ENCODE measurements at regions of chr6 and their contacts with region 1.

Region 1: GRCh38 chr6:53300656-53301551 is 47.8 kb downstream of the ELOVL5 start:
- DNase-seq: peak; percentile 40 to 70 (median 52)
- H3K4me3 ChIP-seq: peak overlapping the region in 1 of 2 donors; percentile 28
- H3K4me3 Mint-ChIP-seq: peak overlapping the region; percentile 57 to 85 (median 73)
- H3K27ac ChIP-seq: peak overlapping the region; percentile 47
- H3K27ac Mint-ChIP-seq: peak overlapping the region; percentile 81 to 97 (median 95)
- H3K4me1 ChIP-seq: peaks cover 81% of the 10 kb centered on the region
- H3K4me1 Mint-ChIP-seq: peaks cover 67 to 87% (median 79%) of the 10 kb centered on the region in 4 donors
- H3K27me3 ChIP-seq: no peaks in the 10 kb centered on the region
- H3K27me3 Mint-ChIP-seq: no peaks in the 10 kb centered on the region

Region 2: GRCh38 chr6:53151676-53152075 is 149.2 kb before region 1 on chr6:
- CTCF ChIA-PET with region 1: no interaction called
- POLR2A ChIA-PET with region 1: no interaction called
- intact Hi-C with region 1: no loop called
- DNase-seq: no peak
- H3K4me3 ChIP-seq: no peak overlapping the region
- H3K4me3 Mint-ChIP-seq: no peak overlapping the region
- H3K27ac ChIP-seq: no peak overlapping the region
- H3K27ac Mint-ChIP-seq: no peak overlapping the region
- H3K4me1 ChIP-seq: no peaks in the 10 kb centered on the region
- H3K4me1 Mint-ChIP-seq: no peaks in the 10 kb centered on the region
- H3K27me3 ChIP-seq: no peaks in the 10 kb centered on the region
- H3K27me3 Mint-ChIP-seq: peaks cover 2 to 20% of the 10 kb centered on the region in 2 donors

Region 3: DNA sequence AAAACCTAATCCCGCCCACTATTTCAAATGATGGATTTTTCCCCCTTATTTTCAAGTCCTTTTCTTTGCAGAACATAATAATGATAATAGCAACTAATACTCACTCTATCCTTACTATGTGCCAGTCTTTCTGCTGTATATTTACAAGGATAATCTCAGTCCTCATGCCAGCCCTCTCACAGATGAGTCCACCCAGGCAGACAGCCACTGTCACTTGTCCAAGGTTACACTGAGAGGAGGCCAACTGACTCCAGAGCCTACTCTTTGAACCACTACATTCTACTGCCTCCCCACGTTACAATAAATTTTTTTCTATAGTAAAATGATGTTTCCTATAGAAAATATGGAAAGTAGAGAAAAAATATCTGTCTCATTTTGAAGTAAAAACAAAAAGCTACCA is 17.0 kb after region 1 on chr6:
- CTCF ChIA-PET with region 1: interaction called, 10 read pairs
- POLR2A ChIA-PET with region 1: interaction called, 7 read pairs
- intact Hi-C with region 1: loop called (anchors 2 kb)
- DNase-seq: no peak
- H3K4me3 ChIP-seq: no peak overlapping the region
- H3K4me3 Mint-ChIP-seq: no peak overlapping the region
- H3K27ac ChIP-seq: no peak overlapping the region
- H3K27ac Mint-ChIP-seq: peak overlapping the region in 4 of 7 donors; percentile 20 to 69 (median 46)
- H3K4me1 ChIP-seq: peaks cover 76% of the 10 kb centered on the region
- H3K4me1 Mint-ChIP-seq: peaks cover 59 to 87% (median 73%) of the 10 kb centered on the region in 4 donors
- H3K27me3 ChIP-seq: no peaks in the 10 kb centered on the region
- H3K27me3 Mint-ChIP-seq: no peaks in the 10 kb centered on the region

Region 4: GRCh38 chr6:53326372-53327016 is 25.6 kb after region 1 on chr6:
- CTCF ChIA-PET with region 1: interaction called, 3 read pairs
- POLR2A ChIA-PET with region 1: interaction called, 12 read pairs
- intact Hi-C with region 1: no loop called
- DNase-seq: no peak
- H3K4me3 ChIP-seq: no peak overlapping the region
- H3K4me3 Mint-ChIP-seq: peak overlapping the region in 3 of 8 donors; percentile 23 to 52 (median 40)
- H3K27ac ChIP-seq: no peak overlapping the region
- H3K27ac Mint-ChIP-seq: peak overlapping the region; percentile 37 to 85 (median 75)
- H3K4me1 ChIP-seq: peaks cover 86% of the 10 kb centered on the region
- H3K4me1 Mint-ChIP-seq: peaks cover 63 to 83% (median 72%) of the 10 kb centered on the region in 4 donors
- H3K27me3 ChIP-seq: no peaks in the 10 kb centered on the region
- H3K27me3 Mint-ChIP-seq: no peaks in the 10 kb centered on the region

Region 5: GRCh38 chr6:53335208-53335994 is 34.5 kb after region 1 on chr6:
- CTCF ChIA-PET with region 1: interaction called, 6 read pairs
- POLR2A ChIA-PET with region 1: interaction called, 47 read pairs
- intact Hi-C with region 1: loop called (anchors 2 kb)
- DNase-seq: peak; percentile 80 to 92 (median 86)
- H3K4me3 ChIP-seq: peak overlapping the region; percentile 32 to 66
- H3K4me3 Mint-ChIP-seq: peak overlapping the region; percentile 85 to 96 (median 91)
- H3K27ac ChIP-seq: peak overlapping the region; percentile 88
- H3K27ac Mint-ChIP-seq: peak overlapping the region; percentile 95 to 100 (median 99)
- H3K4me1 ChIP-seq: peaks cover 96% of the 10 kb centered on the region
- H3K4me1 Mint-ChIP-seq: peaks cover 80 to 94% (median 87%) of the 10 kb centered on the region in 4 donors
- H3K27me3 ChIP-seq: no peaks in the 10 kb centered on the region
- H3K27me3 Mint-ChIP-seq: no peaks in the 10 kb centered on the region

Region 6: DNA sequence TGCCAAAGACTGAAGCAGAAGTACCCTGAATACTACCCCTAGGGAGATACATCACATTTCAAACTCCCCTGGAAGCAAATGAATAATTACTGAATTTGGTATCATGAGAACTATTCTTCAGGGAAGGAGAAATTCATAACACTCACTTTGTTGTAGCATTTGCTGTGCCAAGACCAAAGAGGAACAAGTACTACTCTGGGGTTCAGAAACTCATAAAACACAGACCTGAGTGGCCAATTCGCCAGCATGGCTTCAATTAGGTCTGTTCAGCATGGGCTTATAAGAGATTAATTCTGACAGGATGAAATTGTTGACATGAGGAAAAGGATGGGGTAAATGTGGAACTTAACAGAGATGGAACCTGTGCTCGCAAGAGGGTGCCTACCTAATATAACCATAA is 41.3 kb after region 1 on chr6:
- CTCF ChIA-PET with region 1: interaction called, 11 read pairs
- POLR2A ChIA-PET with region 1: interaction called, 130 read pairs
- intact Hi-C with region 1: no loop called
- DNase-seq: no peak
- H3K4me3 ChIP-seq: no peak overlapping the region
- H3K4me3 Mint-ChIP-seq: peak overlapping the region in 6 of 8 donors; percentile 41 to 63 (median 54)
- H3K27ac ChIP-seq: no peak overlapping the region
- H3K27ac Mint-ChIP-seq: peak overlapping the region; percentile 37 to 98 (median 78)
- H3K4me1 ChIP-seq: peaks cover 95% of the 10 kb centered on the region
- H3K4me1 Mint-ChIP-seq: peaks cover 87 to 95% (median 91%) of the 10 kb centered on the region in 4 donors
- H3K27me3 ChIP-seq: no peaks in the 10 kb centered on the region
- H3K27me3 Mint-ChIP-seq: no peaks in the 10 kb centered on the region

Region 7: DNA sequence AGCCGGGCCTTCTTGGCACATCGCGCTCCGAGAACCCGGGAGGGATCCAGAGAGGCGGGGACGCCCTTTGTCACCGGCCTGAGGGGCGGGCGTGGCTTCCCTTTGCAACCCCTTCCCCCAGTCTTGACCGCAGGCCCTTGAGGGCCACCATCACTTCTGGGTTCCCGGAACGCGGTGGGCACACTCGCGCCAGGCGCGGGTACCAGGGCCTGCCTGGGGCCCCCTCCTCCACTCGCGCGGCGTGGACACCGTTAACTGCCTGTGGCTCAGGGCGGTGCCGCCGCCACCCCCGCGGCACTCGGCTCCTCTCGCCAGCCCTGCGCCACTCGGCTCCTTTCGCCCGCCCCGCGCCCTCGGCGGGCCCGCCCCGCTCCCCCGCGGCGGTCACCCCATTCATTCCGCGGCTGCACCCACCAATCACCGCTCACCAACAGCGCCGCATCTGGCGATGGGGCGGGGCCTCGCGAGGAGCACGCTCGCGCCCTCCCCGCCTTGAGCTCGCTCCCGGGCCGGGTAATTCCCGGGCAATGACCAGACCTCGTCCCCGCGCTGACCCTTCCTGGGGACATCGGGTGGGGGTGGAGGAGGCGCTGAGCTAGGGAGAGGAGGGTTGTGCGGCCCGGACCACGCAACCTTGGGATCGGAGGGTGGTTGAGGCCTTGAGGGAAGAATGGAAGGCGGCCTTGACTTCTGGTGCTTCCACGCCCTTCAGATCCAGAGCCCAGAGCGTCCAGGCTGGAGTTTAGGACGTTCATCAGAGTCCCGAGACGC is 58.4 kb after region 1 on chr6:
- CTCF ChIA-PET with region 1: no interaction called
- POLR2A ChIA-PET with region 1: interaction called, 22 read pairs
- intact Hi-C with region 1: no loop called
- DNase-seq: peak; percentile 85 to 93 (median 92)
- H3K4me3 ChIP-seq: peak overlapping the region; percentile 50 to 74
- H3K4me3 Mint-ChIP-seq: peak overlapping the region; percentile 81 to 96 (median 91)
- H3K27ac ChIP-seq: peak overlapping the region; percentile 99
- H3K27ac Mint-ChIP-seq: peak overlapping the region; percentile 87 to 100 (median 98)
- H3K4me1 ChIP-seq: peaks cover 53% of the 10 kb centered on the region
- H3K4me1 Mint-ChIP-seq: peaks cover 35 to 61% (median 42%) of the 10 kb centered on the region in 4 donors
- H3K27me3 ChIP-seq: no peaks in the 10 kb centered on the region
- H3K27me3 Mint-ChIP-seq: no peaks in the 10 kb centered on the region